ENCODE measurements at regions of chr16 and their contacts with region 1.

Region 1: DNA sequence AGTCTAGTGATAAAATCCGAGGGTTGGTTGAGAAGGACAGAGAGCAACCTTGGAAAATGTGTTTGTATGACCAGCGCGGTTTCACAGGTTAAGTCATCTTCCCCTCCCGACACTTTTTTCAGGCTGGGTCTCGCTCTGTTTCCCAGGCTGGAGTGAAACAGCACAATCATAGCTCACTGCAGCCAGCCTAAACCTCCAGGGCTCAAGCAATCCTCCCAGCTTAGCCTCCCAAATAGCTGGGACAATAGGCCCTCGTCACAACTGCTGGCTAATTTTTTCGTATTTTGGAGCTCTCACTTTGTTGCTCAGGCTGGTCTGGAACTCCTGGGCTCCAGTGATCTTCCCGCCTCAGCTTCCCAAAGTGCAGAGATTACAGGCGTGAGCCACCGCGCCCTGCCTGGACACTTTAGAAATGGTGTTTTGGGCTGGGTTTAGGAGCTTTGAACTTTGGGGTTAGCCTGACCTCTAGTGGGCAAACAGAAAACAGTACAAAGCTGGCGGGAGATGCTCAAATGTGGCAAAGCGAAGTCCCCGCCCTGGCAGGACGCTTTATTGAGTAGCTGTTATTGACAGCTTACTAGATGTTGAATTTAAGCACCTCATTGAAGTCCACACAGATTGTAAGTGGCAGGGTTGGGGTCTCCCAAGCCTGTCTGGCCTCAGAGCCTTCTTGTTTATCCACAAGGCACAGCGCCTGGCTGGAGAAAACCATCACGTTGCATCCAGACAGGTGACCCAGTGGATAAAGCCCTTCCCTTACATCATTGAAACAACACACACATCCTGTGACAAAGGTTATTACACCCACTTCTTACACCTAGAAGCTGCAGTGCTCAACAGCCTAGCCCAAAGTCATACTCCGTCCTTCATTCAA is 34.7 kb upstream of the RBBP6 start:
- DNase-seq: peak; percentile 16
- H3K4me3 ChIP-seq: no peak overlapping the region
- H3K27ac ChIP-seq: no peak overlapping the region
- H3K27me3 ChIP-seq: peaks cover 3% of the 10 kb centered on the region
- CTCF ChIP-seq: peak; percentile 75

Region 2: GRCh38 chr16:24036614-24037013 is 468.1 kb before region 1 on chr16:
- CTCF ChIA-PET with region 1: interaction called, 133 read pairs
- POLR2A ChIA-PET with region 1: no interaction called
- DNase-seq: no peak
- H3K4me3 ChIP-seq: no peak overlapping the region
- H3K27ac ChIP-seq: no peak overlapping the region
- H3K27me3 ChIP-seq: no peaks in the 10 kb centered on the region
- CTCF ChIP-seq: peak; percentile 68

Region 3: GRCh38 chr16:24070851-24071250 is 433.9 kb before region 1 on chr16:
- CTCF ChIA-PET with region 1: interaction called, 20 read pairs
- POLR2A ChIA-PET with region 1: no interaction called
- DNase-seq: no peak
- H3K4me3 ChIP-seq: no peak overlapping the region
- H3K27ac ChIP-seq: no peak overlapping the region
- H3K27me3 ChIP-seq: no peaks in the 10 kb centered on the region
- CTCF ChIP-seq: peak; percentile 45

Region 4: GRCh38 chr16:24516900-24517669 is 12.4 kb after region 1 on chr16:
- CTCF ChIA-PET with region 1: interaction called, 30 read pairs
- POLR2A ChIA-PET with region 1: no interaction called
- DNase-seq: peak; percentile 74
- H3K4me3 ChIP-seq: no peak overlapping the region
- H3K27ac ChIP-seq: no peak overlapping the region
- H3K27me3 ChIP-seq: peaks cover 2% of the 10 kb centered on the region
- CTCF ChIP-seq: peak; percentile 95

Measured in AG04450 (cell line).